ENCODE measurements at regions of chr10 and their contacts with region 1.

Region 1: GRCh38 chr10:104076743-104077160 is 8.9 kb downstream of the COL17A1 start:
- DNase-seq: no peak

Region 2: DNA sequence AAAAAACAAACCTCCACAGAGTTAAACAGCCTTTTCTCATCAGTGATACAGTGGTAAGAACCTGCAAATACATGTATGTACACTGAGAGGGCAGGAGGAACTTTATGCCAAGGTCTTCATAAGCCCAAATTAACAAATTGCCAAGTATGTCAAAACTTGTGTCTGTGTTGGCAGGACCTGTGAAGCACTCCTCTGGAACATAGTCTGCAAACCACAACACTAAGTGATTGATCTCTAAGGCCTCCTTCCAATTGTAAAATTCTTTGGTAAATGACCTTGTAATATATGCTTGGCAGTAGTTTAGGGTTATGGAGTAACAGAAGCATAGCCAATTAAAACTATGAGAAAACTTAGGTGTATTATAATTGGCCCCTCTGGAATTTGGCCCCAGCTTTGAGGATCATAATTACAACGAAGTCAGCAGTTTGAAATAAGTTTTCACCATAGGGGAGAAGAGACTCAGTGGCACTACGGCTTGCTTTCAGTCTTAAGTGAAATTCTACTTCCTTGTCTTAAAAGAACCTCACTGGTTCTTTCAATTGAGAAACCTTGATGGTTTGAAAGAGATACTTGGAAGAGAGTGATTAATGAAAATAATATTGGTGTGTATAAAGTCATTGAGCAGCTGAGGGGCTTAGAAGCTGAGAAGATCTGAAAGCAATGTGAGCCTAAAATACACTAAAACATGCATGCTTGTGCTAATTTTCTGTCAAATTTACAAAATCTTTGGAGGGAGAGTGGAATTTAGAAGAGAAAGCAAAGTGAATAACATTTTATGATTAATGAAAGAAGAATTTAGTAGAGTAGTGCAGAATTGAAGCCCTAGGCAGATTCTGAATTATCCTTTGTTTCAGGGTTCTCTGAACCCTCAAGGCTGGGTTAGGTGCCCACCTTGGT is 1101.0 kb before region 1 on chr10:
- intact Hi-C with region 1: loop called in 1 of 2 experiments (anchors 10 kb)
- DNase-seq: no peak

Region 3: GRCh38 chr10:104054430-104054829 is 22.3 kb before region 1 on chr10:
- intact Hi-C with region 1: no loop called
- DNase-seq: no peak

Measured in posterior vena cava (tissue), 2 donors.